Activated B cell treated with CpG ODN at 0.5 μM for 24 hours (primary cell): ENCODE measurements at regions of chr3 and their contacts with region 1.

Region 1: GRCh38 chr3:4978204-4978965 is 852 bp upstream of the BHLHE40 start:
- DNase-seq: peak; percentile 79
- ATAC-seq: peak; percentile 49
- H3K4me3 Mint-ChIP-seq: peak overlapping the region; percentile 96
- H3K27ac Mint-ChIP-seq: peak overlapping the region; percentile 97
- H3K4me1 Mint-ChIP-seq: peaks cover 63% of the 10 kb centered on the region
- H3K27me3 Mint-ChIP-seq: no peaks in the 10 kb centered on the region
- CTCF ChIP-seq: no peak

Region 2: DNA sequence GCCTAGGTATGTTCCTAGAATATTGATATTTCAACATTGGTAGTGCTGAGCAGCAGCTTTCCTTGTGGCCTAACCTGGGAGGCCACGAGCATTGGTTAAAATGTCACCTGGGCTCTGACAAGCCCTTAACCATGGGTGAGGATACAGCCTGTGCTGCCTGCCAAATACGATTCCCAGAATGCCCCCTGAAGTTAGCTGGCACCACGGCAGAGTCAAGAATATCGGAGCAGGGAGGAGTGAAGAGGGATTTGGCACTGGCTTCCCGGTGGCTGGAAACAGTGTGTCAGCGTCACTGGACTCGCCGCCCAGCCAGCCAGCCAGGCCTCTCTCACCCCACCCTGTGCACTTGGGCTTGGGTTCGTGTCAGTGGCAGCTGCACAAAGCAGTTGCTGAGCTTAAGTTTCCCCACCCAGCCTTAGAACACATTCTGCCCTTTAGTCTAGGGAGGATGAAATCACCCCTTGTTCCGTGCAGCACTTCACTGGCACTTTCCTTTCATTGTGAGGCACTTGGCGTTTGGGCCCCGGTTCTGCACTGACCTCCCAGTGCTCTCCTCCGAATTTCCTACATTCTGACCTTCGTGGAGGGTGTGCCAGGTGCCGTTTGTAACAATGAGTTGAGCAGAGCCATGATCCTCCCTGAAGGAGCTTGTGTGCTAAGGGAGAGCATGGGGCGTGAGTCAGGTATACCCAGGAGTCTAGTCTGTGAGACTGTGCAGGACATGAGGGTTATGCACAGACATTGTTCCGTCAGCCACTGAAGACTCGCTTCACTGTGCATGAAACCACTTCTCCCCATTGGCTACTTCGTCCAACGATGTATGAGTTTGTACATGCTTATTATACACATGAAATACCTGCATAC is 151.9 kb before region 1 on chr3:
- CTCF ChIA-PET with region 1: interaction called, 22 read pairs
- POLR2A ChIA-PET with region 1: interaction called, 55 read pairs
- intact Hi-C with region 1: loop called (anchors 1 kb)
- DNase-seq: no peak
- ATAC-seq: peak; percentile 53
- H3K4me3 Mint-ChIP-seq: peak overlapping the region; percentile 59
- H3K27ac Mint-ChIP-seq: peak overlapping the region; percentile 3
- H3K4me1 Mint-ChIP-seq: peaks cover 85% of the 10 kb centered on the region
- H3K27me3 Mint-ChIP-seq: no peaks in the 10 kb centered on the region
- CTCF ChIP-seq: no peak

Region 3: GRCh38 chr3:4888913-4889846 is 89.2 kb before region 1 on chr3:
- CTCF ChIA-PET with region 1: no interaction called
- POLR2A ChIA-PET with region 1: interaction called, 3 read pairs
- intact Hi-C with region 1: loop called (anchors 5 kb)
- DNase-seq: no peak
- ATAC-seq: peak; percentile 68
- H3K4me3 Mint-ChIP-seq: no peak overlapping the region
- H3K27ac Mint-ChIP-seq: peak overlapping the region; percentile 38
- H3K4me1 Mint-ChIP-seq: peaks cover 20% of the 10 kb centered on the region
- H3K27me3 Mint-ChIP-seq: no peaks in the 10 kb centered on the region
- CTCF ChIP-seq: no peak

Region 4: DNA sequence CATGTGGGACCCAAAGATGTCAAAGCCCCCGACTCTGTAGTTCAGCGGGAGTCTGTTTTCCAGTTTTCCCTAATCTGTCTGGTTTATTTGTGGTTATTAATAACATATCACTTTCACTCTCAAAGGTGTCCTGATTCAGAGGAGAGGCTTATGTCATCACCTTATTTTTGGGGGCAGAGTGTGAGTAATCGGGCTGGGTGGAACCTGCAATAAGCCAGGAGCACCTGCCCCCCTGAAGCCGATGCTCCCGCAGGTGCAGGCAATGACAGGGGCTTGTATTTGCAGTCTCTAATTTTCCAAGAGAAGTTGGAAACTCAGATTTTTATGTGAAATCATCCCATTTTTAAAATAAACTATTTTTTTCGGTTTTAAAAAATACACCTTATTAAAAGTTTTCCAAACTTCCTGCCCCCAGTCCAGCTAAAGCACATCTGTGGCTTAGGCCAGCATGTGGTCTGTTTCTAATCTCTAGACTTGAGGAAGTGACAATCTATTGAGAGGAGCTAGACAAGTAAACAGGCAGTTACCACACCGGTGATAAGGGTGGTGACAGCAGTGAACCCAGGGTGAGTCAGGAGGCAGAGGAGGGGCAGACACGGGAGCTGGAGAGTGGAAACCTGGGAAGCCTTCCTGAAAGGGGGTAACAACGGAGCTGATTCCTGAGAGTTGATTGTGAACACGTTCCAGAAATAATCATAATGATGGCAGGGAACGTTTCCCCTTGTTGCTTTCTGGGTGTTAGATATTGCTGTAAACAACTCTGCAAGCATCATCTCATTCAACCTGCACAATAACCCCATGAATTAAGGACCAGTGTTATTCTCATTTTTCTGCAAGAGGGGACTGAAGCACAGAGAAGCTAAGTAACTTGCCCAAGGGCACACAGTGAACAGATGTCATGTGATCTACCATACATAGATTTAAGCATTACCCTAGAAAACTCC is 38.1 kb after region 1 on chr3:
- CTCF ChIA-PET with region 1: interaction called, 65 read pairs
- POLR2A ChIA-PET with region 1: interaction called, 478 read pairs
- intact Hi-C with region 1: loop called (anchors 1 kb)
- DNase-seq: no peak
- ATAC-seq: peak; percentile 18
- H3K4me3 Mint-ChIP-seq: peak overlapping the region; percentile 16
- H3K27ac Mint-ChIP-seq: peak overlapping the region; percentile 66
- H3K4me1 Mint-ChIP-seq: peaks cover 86% of the 10 kb centered on the region
- H3K27me3 Mint-ChIP-seq: no peaks in the 10 kb centered on the region
- CTCF ChIP-seq: no peak

Region 5: DNA sequence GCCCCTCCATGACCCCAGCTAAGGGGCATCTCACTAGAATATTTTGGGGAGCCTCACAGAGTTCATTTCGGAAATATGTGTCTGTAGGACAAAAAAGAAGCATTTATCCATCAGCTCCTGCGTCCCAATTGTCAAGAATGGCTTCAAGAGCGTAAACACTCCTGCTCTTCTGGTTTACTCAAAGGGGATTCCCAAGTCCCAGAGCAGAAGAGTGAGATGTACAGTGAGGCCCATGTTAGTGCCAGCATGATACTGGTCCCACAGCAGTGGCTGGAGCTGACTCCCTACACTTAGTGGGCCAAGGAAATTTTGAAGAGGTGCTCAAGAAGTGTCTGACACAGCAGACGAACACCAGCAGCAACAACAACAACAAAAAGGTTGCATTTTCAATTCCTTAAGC is 108.8 kb after region 1 on chr3:
- CTCF ChIA-PET with region 1: no interaction called
- POLR2A ChIA-PET with region 1: no interaction called
- intact Hi-C with region 1: no loop called
- DNase-seq: no peak
- ATAC-seq: no peak
- H3K4me3 Mint-ChIP-seq: no peak overlapping the region
- H3K27ac Mint-ChIP-seq: no peak overlapping the region
- H3K4me1 Mint-ChIP-seq: no peaks in the 10 kb centered on the region
- H3K27me3 Mint-ChIP-seq: peaks cover 5% of the 10 kb centered on the region
- CTCF ChIP-seq: no peak

Region 6: DNA sequence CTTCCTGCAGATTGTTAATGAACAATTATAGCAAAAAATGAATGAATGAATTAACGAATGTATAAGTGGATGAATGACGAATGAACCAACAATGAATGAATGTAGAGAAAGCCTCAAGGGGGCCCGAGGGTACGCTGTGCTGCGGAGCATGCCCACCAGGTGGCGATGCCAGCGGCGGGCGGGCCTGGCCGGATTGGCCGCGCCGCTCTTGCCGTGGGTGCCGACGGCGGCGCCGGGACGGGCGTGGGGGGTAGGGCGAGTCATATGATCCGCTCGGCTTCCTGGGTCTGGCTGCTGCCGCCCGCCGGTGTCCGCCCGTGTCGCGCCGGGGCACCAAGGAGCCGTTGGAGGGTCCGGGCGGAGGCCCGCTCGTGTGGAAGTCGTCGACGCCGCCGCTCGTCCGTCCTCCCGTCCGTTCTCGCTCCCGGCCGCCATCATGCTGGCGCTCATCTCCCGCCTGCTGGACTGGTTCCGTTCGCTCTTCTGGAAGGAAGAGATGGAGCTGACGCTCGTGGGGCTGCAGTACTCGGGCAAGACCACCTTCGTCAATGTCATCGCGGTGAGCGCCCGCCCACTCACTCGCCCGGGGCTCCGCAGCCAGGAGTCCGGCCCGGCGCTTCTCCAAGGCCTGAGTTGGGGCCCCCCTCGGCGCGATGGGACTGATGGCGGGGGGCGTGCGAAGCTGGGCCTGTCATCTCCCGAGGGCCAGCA is 143.8 kb after region 1 on chr3 and contains the start of gene ARL8B:
- CTCF ChIA-PET with region 1: no interaction called
- POLR2A ChIA-PET with region 1: interaction called, 4 read pairs
- intact Hi-C with region 1: loop called (anchors 2 kb)
- DNase-seq: peak; percentile 93
- ATAC-seq: peak; percentile 95
- H3K4me3 Mint-ChIP-seq: peak within 1 kb of the TSS; percentile 94
- H3K27ac Mint-ChIP-seq: peak within 1 kb of the TSS; percentile 91
- H3K4me1 Mint-ChIP-seq: peaks cover 43% of the 10 kb centered on the region
- H3K27me3 Mint-ChIP-seq: no peaks in the 10 kb centered on the region
- CTCF ChIP-seq: peak; percentile 82
- total RNA-seq, gene ARL8B: 57.9 and 62.6 TPM in 2 replicates